GM18951 (cell line): ENCODE measurements at regions of chr13 and their contacts with region 1.

Region 1: DNA sequence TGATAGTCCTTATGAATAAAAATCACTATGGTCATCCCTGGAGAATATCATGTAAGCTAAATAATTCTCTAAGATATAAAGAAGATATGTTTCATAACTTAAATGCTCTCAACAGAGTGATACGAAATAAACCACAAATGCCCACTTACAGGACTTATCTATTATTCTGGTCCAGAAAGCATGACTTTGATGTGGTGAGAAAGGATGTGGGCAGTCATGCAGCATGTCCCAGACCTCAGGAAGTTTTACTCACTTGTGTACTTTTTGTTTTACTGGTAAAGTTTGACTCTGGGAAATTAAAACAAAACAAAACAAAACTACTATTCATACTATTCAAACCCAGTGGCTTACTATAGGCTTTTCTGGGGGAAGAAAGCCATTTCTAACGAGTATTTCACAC is 483.2 kb upstream of the SLITRK6 start:
- POLR2A ChIP-seq: no peak

Region 2: GRCh38 chr13:85204668-85205344 is 1077.6 kb before region 1 on chr13:
- in situ Hi-C with region 1: no loop called
- POLR2A ChIP-seq: no peak

Region 3: DNA sequence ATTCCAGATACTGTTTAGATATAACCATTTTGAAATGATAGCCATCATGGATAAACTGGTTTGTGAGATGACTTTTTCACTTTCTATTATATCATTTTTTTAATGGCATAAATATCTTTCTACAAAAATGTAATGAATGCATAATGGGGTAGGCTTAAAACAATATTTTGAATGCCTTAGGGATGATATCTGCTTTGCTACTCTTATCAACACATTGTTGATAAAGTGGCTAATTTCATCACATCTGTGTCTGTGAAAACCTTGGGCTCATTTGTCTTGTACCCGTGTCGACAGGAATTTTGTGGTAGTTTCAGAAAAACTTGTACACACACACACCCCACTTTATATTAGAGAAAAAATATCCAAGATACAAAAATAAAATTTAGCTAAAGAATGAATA is 527.3 kb before region 1 on chr13:
- in situ Hi-C with region 1: no loop called
- POLR2A ChIP-seq: no peak

Region 4: DNA sequence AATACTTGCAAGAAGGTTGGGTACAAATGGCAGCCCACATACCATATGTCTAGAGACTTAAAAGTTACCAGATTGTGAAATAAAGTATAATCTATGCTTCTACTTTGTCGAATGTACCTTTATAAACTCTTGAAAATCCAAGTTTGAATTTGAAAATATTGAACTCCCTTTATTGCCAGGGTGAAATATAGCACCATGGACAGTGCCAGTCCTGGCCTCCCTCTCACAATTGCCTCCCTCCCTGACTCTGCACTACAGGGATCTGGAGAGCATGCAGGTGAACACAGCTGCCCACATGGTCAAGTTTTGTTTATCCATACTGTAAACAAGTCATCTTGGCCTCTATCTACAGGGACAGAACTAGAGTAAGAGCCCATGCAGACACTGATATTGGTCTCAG is 89.2 kb before region 1 on chr13:
- in situ Hi-C with region 1: loop called (anchors 5 kb)
- POLR2A ChIP-seq: no peak